CD4-positive, alpha-beta T cell (primary cell): ENCODE measurements at regions of chr17 and their contacts with region 1.

Region 1: GRCh38 chr17:4498461-4499397 is at the start of gene SPNS2:
- DNase-seq: peak; percentile 24 to 84 (median 54)
- ATAC-seq: peak; percentile 93
- H3K4me3 ChIP-seq: peak within 1 kb of the TSS; percentile 45
- H3K4me3 Mint-ChIP-seq: peak within 1 kb of the TSS; percentile 83
- H3K27ac ChIP-seq: no peak within 1 kb of the TSS
- H3K27ac Mint-ChIP-seq: no peak within 1 kb of the TSS
- H3K4me1 ChIP-seq: peaks cover 33% of the 10 kb centered on the region
- H3K4me1 Mint-ChIP-seq: peaks cover 30% of the 10 kb centered on the region
- H3K27me3 ChIP-seq: peaks cover 32 to 36% of the 10 kb centered on the region in 2 experiments
- H3K27me3 Mint-ChIP-seq: peaks cover 36% of the 10 kb centered on the region
- CTCF ChIP-seq: no peak
- total RNA-seq, gene SPNS2: 0.33 to 0.53 TPM

Region 2: DNA sequence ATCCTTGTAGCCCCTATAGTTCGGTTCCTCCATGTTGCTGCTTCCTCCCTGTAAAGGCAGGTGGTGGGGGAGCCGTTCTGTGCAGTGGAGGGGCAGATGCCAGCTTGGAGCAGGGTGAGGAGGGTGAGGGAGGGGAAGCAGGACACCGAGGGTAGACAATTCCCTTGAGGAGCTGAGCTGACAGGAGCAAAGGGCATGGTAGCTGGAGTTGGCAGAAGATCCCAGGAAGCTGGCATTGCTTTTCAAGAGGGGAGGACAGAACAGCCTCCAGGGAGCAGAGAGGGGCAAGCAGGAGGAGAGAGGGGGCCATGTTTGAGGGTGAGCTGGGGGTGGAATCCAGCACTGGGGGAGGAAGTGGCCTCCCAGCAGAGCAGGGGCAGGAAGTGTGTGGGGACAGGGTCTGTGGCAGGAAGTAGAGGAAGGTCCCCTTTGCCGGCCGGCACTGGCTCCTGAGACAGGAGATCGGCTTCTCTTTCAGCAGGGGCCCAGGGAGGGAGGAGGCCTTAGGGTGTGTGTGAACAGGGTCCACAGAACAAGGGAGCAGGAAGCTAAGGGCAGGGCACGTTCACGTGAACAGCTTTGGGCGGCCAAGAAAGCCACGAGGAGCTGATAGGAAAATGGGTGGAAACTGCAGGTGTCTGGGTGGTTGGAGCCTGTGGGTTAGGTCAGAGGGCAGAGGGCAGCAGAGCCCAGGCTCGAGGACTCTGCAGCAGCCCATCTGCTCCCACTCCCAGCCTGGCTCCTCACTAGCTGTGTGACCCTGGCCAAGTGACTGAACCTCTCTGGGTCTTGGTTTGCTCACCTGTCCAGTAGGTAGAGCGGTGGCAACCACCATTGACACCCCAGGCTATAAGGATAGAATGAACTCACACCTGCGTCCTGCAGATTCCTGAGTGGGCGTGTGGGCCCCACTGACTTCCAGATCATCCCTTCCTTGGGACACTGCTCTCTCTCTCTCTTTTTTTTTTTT is 17.5 kb before region 1 on chr17:
- CTCF ChIA-PET with region 1: no interaction called
- POLR2A ChIA-PET with region 1: interaction called, 21 read pairs
- intact Hi-C with region 1: no loop called
- DNase-seq: peak in 8 of 14 experiments; percentile 14 to 70 (median 44)
- ATAC-seq: peak; percentile 72
- H3K4me3 ChIP-seq: peak overlapping the region; percentile 4
- H3K4me3 Mint-ChIP-seq: peak overlapping the region; percentile 71
- H3K27ac ChIP-seq: peak overlapping the region; percentile 40 to 73
- H3K27ac Mint-ChIP-seq: peak overlapping the region; percentile 81
- H3K4me1 ChIP-seq: peaks cover 61% of the 10 kb centered on the region
- H3K4me1 Mint-ChIP-seq: peaks cover 48% of the 10 kb centered on the region
- H3K27me3 ChIP-seq: no peaks in the 10 kb centered on the region
- H3K27me3 Mint-ChIP-seq: no peaks in the 10 kb centered on the region
- CTCF ChIP-seq: no peak

Region 3: GRCh38 chr17:5191541-5192417 is 693.0 kb after region 1 on chr17 and contains the start of gene ZNF594:
- CTCF ChIA-PET with region 1: no interaction called
- POLR2A ChIA-PET with region 1: no interaction called
- intact Hi-C with region 1: no loop called
- DNase-seq: peak; percentile 94 to 98 (median 96)
- ATAC-seq: peak; percentile 99
- H3K4me3 ChIP-seq: peak within 1 kb of the TSS; percentile 97
- H3K4me3 Mint-ChIP-seq: peak within 1 kb of the TSS; percentile 95
- H3K27ac ChIP-seq: peak within 1 kb of the TSS; percentile 51 to 81
- H3K27ac Mint-ChIP-seq: peak within 1 kb of the TSS; percentile 88
- H3K4me1 ChIP-seq: peaks cover 23% of the 10 kb centered on the region
- H3K4me1 Mint-ChIP-seq: peaks cover 33% of the 10 kb centered on the region
- H3K27me3 ChIP-seq: no peaks in the 10 kb centered on the region
- H3K27me3 Mint-ChIP-seq: no peaks in the 10 kb centered on the region
- CTCF ChIP-seq: peak; percentile 80
- total RNA-seq, gene ZNF594: 2.2 to 3.1 TPM